Natural killer cell (primary cell): ENCODE measurements at regions of chr2 and their contacts with region 1.

Region 1: GRCh38 chr2:235746257-235747084 is 252.6 kb downstream of the AGAP1 start:
- DNase-seq: peak; percentile 34 to 77
- ATAC-seq: peak; percentile 65 to 100 (median 87)
- H3K4me3 ChIP-seq: no peak overlapping the region
- H3K4me3 Mint-ChIP-seq: no peak overlapping the region
- H3K27ac ChIP-seq: no peak overlapping the region
- H3K27ac Mint-ChIP-seq: no peak overlapping the region
- H3K4me1 ChIP-seq: no peaks in the 10 kb centered on the region
- H3K4me1 Mint-ChIP-seq: no peaks in the 10 kb centered on the region
- H3K27me3 ChIP-seq: no peaks in the 10 kb centered on the region
- H3K27me3 Mint-ChIP-seq: no peaks in the 10 kb centered on the region
- CTCF ChIP-seq: peak; percentile 87

Region 2: DNA sequence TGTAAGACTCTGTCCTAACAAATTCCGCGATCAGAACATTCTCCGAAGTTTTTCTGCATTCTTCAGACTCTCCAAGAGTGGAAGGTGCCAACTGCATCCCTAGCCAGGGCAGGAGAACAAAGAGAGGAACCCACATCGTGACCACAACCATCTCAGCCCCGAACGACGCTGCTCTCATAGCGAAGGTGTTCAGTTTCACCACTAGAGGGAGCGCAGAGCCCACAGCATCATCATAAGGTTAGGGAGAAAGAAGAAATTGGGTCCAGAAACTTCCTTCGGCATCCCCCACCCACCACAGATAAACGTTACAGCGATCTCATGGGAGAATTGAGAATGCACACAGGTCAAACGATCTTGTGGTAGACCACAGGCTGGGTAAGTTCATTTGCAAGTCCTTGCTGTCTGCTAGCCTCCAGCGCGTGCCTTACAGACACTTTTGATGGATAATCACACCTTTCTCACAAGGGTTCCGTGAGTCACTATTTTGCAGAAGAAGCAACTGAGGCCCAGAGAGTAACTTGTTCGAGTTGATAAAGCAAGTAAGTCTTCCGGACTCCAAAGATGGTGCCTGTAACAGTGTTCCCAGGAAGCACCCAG is 1195.9 kb before region 1 on chr2:
- intact Hi-C with region 1: loop called (anchors 5 kb)
- DNase-seq: peak; percentile 39 to 80
- ATAC-seq: peak; percentile 68 to 93 (median 81)
- H3K4me3 ChIP-seq: no peak overlapping the region
- H3K4me3 Mint-ChIP-seq: no peak overlapping the region
- H3K27ac ChIP-seq: no peak overlapping the region
- H3K27ac Mint-ChIP-seq: no peak overlapping the region
- H3K4me1 ChIP-seq: peaks cover 10% of the 10 kb centered on the region
- H3K4me1 Mint-ChIP-seq: peaks cover 17% of the 10 kb centered on the region in 2 donors
- H3K27me3 ChIP-seq: no peaks in the 10 kb centered on the region
- H3K27me3 Mint-ChIP-seq: peaks cover 27 to 46% of the 10 kb centered on the region in 2 donors
- CTCF ChIP-seq: peak; percentile 91

Region 3: GRCh38 chr2:235135990-235136561 is 610.4 kb before region 1 on chr2:
- intact Hi-C with region 1: loop called (anchors 2 kb)
- DNase-seq: peak; percentile 30 to 70
- ATAC-seq: peak in 1 of 3 donors; percentile 56
- H3K4me3 ChIP-seq: no peak overlapping the region
- H3K4me3 Mint-ChIP-seq: no peak overlapping the region
- H3K27ac ChIP-seq: no peak overlapping the region
- H3K27ac Mint-ChIP-seq: no peak overlapping the region
- H3K4me1 ChIP-seq: peaks cover 3% of the 10 kb centered on the region
- H3K4me1 Mint-ChIP-seq: no peaks in the 10 kb centered on the region
- H3K27me3 ChIP-seq: no peaks in the 10 kb centered on the region
- H3K27me3 Mint-ChIP-seq: peaks cover 19 to 51% of the 10 kb centered on the region in 2 donors
- CTCF ChIP-seq: peak; percentile 41

Region 4: GRCh38 chr2:235595422-235596010 is 151.0 kb before region 1 on chr2:
- intact Hi-C with region 1: loop called (anchors 1 kb)
- DNase-seq: peak; percentile 42 to 62
- ATAC-seq: peak in 2 of 3 donors; percentile 40 to 71
- H3K4me3 ChIP-seq: no peak overlapping the region
- H3K4me3 Mint-ChIP-seq: no peak overlapping the region
- H3K27ac ChIP-seq: no peak overlapping the region
- H3K27ac Mint-ChIP-seq: no peak overlapping the region
- H3K4me1 ChIP-seq: no peaks in the 10 kb centered on the region
- H3K4me1 Mint-ChIP-seq: no peaks in the 10 kb centered on the region
- H3K27me3 ChIP-seq: no peaks in the 10 kb centered on the region
- H3K27me3 Mint-ChIP-seq: peaks cover 4 to 6% of the 10 kb centered on the region in 2 donors
- CTCF ChIP-seq: peak; percentile 62

Region 5: GRCh38 chr2:235639428-235639773 is 107.1 kb before region 1 on chr2:
- intact Hi-C with region 1: loop called (anchors 1 kb)
- DNase-seq: no peak
- ATAC-seq: no peak
- H3K4me3 ChIP-seq: no peak overlapping the region
- H3K4me3 Mint-ChIP-seq: no peak overlapping the region
- H3K27ac ChIP-seq: peak overlapping the region; percentile 17
- H3K27ac Mint-ChIP-seq: no peak overlapping the region
- H3K4me1 ChIP-seq: no peaks in the 10 kb centered on the region
- H3K4me1 Mint-ChIP-seq: no peaks in the 10 kb centered on the region
- H3K27me3 ChIP-seq: no peaks in the 10 kb centered on the region
- H3K27me3 Mint-ChIP-seq: peaks cover 14 to 33% of the 10 kb centered on the region in 2 donors
- CTCF ChIP-seq: no peak